A673 (cell line): ENCODE measurements at regions of chr15 and their contacts with region 1.

Region 1: DNA sequence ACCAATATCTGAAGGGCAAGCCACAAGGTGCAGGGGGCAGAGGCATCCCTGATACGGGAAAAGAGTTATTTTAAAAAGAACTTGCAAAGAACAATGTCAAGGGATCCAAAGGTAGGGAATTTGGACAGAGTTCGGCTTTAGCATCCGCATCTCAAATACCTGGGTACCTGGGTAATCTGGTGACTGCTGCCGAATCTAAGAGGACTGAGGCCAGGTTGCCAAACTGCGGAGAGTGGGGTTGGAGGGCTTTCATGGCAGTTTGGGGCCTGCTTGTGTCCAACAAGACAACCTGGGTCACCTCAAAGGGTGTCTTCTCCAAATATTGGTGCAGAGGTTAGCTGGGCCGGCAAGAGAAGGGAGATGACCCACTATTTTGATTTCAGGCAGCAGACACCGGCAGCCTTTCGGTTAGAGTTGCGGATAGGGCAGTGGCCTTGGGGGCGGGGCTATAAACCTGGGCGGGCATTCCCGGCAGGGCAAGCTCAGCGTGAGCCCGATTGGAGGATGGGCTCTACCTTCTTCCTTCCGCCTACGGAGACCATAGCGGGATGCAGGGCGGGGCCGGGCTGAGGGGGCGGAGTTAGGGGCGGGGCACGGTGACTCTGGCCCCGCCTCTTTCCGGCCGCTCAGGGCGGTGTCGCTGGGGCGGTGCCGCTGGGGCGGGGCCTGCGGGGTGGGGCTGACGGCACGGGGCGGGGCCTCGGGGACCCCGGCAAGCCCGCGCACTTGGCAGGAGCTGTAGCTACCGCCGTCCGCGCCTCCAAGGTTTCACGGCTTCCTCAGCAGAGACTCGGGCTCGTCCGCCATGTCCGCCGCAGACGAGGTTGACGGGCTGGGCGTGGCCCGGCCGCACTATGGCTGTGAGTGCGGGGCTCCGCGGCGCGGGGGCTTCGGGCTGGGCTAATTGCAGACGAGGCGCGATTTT is at the start of gene IQGAP1:
- DNase-seq: peak; percentile 97
- H3K4me3 ChIP-seq: peak within 1 kb of the TSS; percentile 83
- H3K27ac ChIP-seq: peak within 1 kb of the TSS; percentile 93
- H3K4me1 ChIP-seq: peaks cover 11% of the 10 kb centered on the region
- H3K27me3 ChIP-seq: no peaks in the 10 kb centered on the region
- CTCF ChIP-seq: no peak
- total RNA-seq, gene IQGAP1: 115 and 119 TPM in 2 replicates

Region 2: GRCh38 chr15:88484682-88485331 is 1903.0 kb before region 1 on chr15:
- CTCF ChIA-PET with region 1: no interaction called
- POLR2A ChIA-PET with region 1: interaction called, 10 read pairs
- intact Hi-C with region 1: no loop called
- DNase-seq: peak; percentile 49
- H3K4me3 ChIP-seq: no peak overlapping the region
- H3K27ac ChIP-seq: no peak overlapping the region
- H3K4me1 ChIP-seq: no peaks in the 10 kb centered on the region
- H3K27me3 ChIP-seq: no peaks in the 10 kb centered on the region
- CTCF ChIP-seq: no peak

Region 3: GRCh38 chr15:90400406-90401314 is 12.9 kb after region 1 on chr15:
- CTCF ChIA-PET with region 1: no interaction called
- POLR2A ChIA-PET with region 1: interaction called, 13 read pairs
- intact Hi-C with region 1: no loop called
- DNase-seq: peak; percentile 94
- H3K4me3 ChIP-seq: no peak overlapping the region
- H3K27ac ChIP-seq: peak overlapping the region; percentile 71
- H3K4me1 ChIP-seq: peaks cover 49% of the 10 kb centered on the region
- H3K27me3 ChIP-seq: no peaks in the 10 kb centered on the region
- CTCF ChIP-seq: no peak

Region 4: GRCh38 chr15:90680371-90680935 is 292.7 kb after region 1 on chr15:
- CTCF ChIA-PET with region 1: no interaction called
- POLR2A ChIA-PET with region 1: no interaction called
- intact Hi-C with region 1: no loop called
- DNase-seq: no peak
- H3K4me3 ChIP-seq: no peak overlapping the region
- H3K27ac ChIP-seq: peak overlapping the region; percentile 27
- H3K4me1 ChIP-seq: peaks cover 5% of the 10 kb centered on the region
- H3K27me3 ChIP-seq: no peaks in the 10 kb centered on the region
- CTCF ChIP-seq: no peak